IMR-90 (cell line): ENCODE measurements at regions of chr3 and their contacts with region 1.

Region 1: DNA sequence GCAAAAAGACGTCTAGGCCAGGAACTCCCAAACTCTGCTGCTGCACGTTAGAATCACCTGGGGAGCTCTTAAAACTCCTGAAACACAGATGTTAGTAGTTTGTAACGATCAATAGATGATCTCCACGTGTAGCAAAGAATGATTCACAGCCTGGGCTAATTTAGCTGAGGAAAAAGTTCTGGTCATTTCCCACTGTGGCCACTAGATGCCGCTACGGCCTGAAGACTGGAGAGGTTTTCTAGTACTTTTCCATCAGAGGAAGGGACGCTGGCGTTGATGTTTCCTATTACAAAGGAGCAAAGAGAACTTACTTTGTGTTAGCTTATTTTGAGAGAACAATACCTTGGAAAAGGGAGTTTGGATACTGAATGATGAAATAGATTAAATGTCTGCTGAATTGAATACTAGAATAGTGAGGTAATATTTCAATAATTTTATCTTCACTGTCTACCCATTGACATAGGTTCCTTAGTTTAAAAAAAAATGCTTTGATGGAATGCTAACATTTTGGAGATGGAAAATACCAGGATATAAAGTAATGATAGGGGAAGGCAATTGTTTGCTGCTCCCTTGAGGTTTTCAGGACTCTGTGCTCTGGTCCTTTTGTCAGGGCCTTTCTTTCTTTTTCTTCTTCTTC is 159.1 kb downstream of the P3H2 start:
- DNase-seq: peak; percentile 82
- ATAC-seq: peak; percentile 92
- H3K4me3 ChIP-seq: no peak overlapping the region
- H3K27ac ChIP-seq: no peak overlapping the region
- H3K4me1 ChIP-seq: no peaks in the 10 kb centered on the region
- H3K27me3 ChIP-seq: no peaks in the 10 kb centered on the region
- CTCF ChIP-seq: peak; percentile 96
- POLR2A ChIP-seq: no peak
- RAD21 ChIP-seq: peak; percentile 93

Region 2: DNA sequence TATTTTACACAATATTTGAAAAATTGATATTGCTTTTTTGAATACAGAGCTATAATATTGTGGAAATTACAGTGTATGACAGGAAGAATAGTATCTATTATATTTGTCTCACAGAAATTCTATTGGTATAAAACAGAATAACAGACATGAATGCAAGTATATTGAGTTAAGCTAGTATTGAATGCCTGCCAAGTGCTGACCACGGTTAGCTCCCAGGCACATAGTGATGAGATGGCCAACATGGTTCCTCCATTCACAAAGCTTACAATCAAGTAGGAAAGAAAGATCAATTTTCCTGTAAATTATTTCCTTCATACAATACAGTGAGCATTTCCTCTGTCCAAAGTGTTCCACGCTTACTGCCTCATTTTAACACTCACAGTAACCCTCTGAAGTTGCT is 262.8 kb before region 1 on chr3:
- CTCF ChIA-PET with region 1: no interaction called
- POLR2A ChIA-PET with region 1: no interaction called
- dilution Hi-C with region 1: no loop called
- in situ Hi-C with region 1: no loop called
- intact Hi-C with region 1: no loop called
- DNase-seq: peak; percentile 33
- ATAC-seq: no peak
- H3K4me3 ChIP-seq: no peak overlapping the region
- H3K27ac ChIP-seq: no peak overlapping the region
- H3K4me1 ChIP-seq: no peaks in the 10 kb centered on the region
- H3K27me3 ChIP-seq: no peaks in the 10 kb centered on the region
- CTCF ChIP-seq: no peak
- POLR2A ChIP-seq: no peak
- RAD21 ChIP-seq: no peak

Region 3: DNA sequence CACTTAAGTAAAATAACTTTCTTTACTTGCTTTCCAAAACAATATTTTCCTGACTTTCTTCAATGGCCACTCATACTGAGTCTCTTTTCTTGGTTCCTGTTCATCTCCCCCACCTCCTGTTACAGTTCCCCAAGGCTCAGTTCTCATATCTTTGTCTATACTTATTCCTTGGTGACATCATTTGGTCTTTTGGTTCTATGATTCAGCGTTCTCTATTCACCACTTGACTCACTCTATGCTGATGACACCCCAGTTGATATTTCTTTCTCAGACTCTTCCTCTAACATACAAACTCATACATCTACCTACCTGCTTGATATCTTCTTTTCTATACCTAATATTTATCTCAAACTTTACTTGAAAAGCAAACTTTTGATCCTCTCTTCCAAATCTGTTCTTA is 244.1 kb after region 1 on chr3:
- CTCF ChIA-PET with region 1: interaction called, 9 read pairs
- POLR2A ChIA-PET with region 1: no interaction called
- dilution Hi-C with region 1: no loop called
- in situ Hi-C with region 1: no loop called
- intact Hi-C with region 1: loop called (anchors 1 kb)
- DNase-seq: peak; percentile 92
- ATAC-seq: peak; percentile 86
- H3K4me3 ChIP-seq: no peak overlapping the region
- H3K27ac ChIP-seq: no peak overlapping the region
- H3K4me1 ChIP-seq: no peaks in the 10 kb centered on the region
- H3K27me3 ChIP-seq: no peaks in the 10 kb centered on the region
- CTCF ChIP-seq: no peak
- POLR2A ChIP-seq: no peak
- RAD21 ChIP-seq: 0 out of 2 replicates have a peak, but pooled peaks have one; percentile 23

Region 4: DNA sequence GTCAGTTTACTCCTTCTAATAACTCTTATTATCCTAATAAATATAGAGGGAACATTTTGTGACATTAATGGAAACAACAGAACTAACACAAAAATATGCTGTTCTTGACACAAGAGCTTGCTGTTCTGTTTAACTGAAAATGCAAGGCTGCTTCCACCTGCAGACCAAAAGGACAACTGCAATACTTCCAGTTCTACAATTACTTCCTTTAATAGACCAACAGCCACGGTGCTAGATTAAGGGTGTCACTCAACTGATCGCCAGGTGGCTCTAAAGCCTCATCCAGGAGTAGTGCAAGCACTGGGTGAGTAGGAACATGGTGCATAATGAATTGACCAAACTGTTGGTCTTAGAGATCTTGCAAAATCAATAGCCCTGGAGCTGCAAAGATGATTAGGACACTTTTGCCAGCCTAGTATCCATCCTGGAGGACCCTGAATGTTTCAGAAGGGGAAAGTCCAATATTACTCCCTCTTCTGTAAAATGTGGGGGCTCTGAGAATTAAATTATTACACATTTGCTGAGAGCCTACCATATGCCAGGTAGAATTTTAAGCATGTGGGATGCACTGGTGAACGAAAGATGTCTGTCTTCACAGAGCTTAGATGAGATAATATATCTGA is 422.7 kb after region 1 on chr3:
- CTCF ChIA-PET with region 1: interaction called, 4 read pairs
- POLR2A ChIA-PET with region 1: no interaction called
- dilution Hi-C with region 1: no loop called
- in situ Hi-C with region 1: no loop called
- intact Hi-C with region 1: loop called (anchors 1 kb)
- DNase-seq: peak; percentile 69
- ATAC-seq: peak; percentile 21; the same call in 1 of the 2 replicates
- H3K4me3 ChIP-seq: no peak overlapping the region
- H3K27ac ChIP-seq: no peak overlapping the region
- H3K4me1 ChIP-seq: peaks cover 5% of the 10 kb centered on the region
- H3K27me3 ChIP-seq: no peaks in the 10 kb centered on the region
- CTCF ChIP-seq: peak; percentile 62
- POLR2A ChIP-seq: no peak
- RAD21 ChIP-seq: peak; percentile 62

Region 5: DNA sequence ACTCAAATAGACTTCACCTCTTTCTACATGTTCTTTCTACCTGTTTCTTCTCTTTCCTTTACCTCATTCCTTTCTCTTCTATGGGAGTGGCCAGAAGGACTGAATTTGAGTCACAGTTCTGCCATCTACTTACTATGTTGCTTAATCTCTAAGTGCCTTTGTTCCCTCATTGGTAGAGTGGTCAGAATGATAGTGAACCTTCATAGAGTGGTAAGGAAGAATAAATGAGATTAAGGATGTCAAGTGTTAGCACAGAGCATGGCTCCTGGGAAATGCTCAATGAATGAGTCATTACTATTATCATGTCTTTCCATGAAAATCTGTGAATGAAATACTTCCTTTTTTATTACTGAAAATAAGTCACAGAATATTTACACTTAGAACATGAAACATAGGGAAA is 470.6 kb after region 1 on chr3:
- CTCF ChIA-PET with region 1: interaction called, 5 read pairs
- POLR2A ChIA-PET with region 1: no interaction called
- dilution Hi-C with region 1: no loop called
- in situ Hi-C with region 1: loop called (anchors 10 kb)
- intact Hi-C with region 1: no loop called
- DNase-seq: peak; percentile 14
- ATAC-seq: no peak
- H3K4me3 ChIP-seq: no peak overlapping the region
- H3K27ac ChIP-seq: no peak overlapping the region
- H3K4me1 ChIP-seq: no peaks in the 10 kb centered on the region
- H3K27me3 ChIP-seq: no peaks in the 10 kb centered on the region
- CTCF ChIP-seq: no peak
- POLR2A ChIP-seq: no peak
- RAD21 ChIP-seq: no peak